Activated naive CD4-positive, alpha-beta T cell treated with anti-CD3 and anti-CD28 coated beads, Interleukin-2, amount 10 ng/mL, durations not matched to agents 7 days and 5 days (primary cell): ENCODE measurements at regions of chr2 and their contacts with region 1.

Region 1: DNA sequence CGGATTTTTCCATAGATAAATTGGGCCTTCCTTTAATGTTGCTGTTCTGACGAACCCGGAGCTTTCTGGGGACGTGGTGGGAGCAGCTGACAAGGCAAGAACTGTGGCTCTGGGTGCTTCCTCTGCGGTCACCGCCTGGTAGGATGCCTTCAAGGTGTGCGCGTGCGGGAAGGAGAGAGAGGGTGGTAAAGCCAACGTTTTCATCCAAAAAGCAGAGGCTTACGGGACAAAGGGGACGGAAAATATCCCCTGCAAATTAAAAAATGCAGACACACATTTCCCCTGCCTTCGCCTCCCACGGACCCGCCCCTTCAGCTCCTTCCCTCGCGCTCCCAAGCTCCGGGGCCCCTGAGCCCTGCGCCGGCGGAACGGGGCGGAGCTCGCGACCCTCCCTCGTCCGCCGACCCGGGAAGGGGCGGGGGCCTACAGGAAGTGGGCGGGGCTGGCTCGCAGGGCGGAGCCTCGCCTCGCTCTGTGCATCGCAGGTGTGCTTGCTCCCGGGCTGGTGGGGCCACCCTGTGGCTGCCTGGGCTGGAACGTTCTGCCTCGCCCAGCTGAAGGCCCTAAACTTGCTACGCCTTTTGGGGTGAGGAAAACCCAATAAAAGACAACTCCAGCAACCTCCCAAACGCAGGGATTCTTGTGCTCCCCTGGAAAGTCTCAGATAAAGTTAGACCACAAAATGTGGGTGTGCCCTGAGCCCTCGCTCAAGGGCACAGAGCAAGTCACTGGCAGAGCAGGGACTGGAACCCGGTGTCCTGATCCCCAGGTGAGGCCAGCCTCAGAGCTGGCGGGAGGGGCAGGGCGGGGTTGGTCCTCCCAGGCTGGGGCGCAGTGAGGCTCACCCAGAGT is 25.4 kb upstream of the SLC66A3 start:
- DNase-seq: peak; percentile 89
- H3K4me3 Mint-ChIP-seq: peak overlapping the region; percentile 59
- H3K27ac Mint-ChIP-seq: peak overlapping the region; percentile 33
- H3K4me1 Mint-ChIP-seq: peaks cover 44% of the 10 kb centered on the region
- H3K27me3 Mint-ChIP-seq: peaks cover 49% of the 10 kb centered on the region

Region 2: DNA sequence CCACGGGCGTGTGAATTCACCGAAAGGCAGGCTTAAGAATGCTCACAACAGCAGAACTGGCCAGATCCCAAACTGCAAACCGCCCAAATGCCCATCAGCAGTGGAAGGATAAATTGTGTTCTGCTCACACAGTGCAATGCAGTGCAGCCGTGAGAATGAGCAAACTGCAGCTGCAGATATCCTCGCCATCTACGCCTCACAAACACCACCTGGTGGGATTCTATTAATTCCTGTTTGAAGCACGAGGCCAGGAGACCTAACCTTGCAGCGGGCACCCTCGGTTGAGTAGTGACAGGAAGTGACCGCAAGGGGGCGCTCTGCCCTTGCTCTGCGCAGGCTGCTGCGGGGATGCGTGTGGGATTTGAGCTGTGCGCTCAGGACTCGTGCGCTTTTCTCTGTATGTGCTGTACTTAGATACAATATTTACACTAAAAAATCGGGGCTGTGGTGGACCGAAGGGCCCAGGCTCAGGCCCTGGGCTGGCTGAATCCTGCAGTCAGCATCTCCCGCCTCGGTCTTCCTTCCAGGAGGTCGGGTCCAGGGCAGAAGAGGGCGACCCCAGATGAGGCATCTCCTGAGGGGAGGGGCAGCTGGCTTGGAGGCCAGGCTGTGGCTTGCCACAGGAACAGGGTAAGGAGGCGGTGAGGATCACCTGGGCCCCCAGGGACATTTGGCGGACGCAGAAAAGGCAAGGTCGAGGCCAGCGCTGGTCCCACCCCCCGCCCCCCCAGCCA is 297.5 kb before region 1 on chr2:
- CTCF ChIA-PET with region 1: interaction called, 137 read pairs
- DNase-seq: peak; percentile 87
- H3K4me3 Mint-ChIP-seq: no peak overlapping the region
- H3K27ac Mint-ChIP-seq: no peak overlapping the region
- H3K4me1 Mint-ChIP-seq: peaks cover 4% of the 10 kb centered on the region
- H3K27me3 Mint-ChIP-seq: peaks cover 64% of the 10 kb centered on the region

Region 3: DNA sequence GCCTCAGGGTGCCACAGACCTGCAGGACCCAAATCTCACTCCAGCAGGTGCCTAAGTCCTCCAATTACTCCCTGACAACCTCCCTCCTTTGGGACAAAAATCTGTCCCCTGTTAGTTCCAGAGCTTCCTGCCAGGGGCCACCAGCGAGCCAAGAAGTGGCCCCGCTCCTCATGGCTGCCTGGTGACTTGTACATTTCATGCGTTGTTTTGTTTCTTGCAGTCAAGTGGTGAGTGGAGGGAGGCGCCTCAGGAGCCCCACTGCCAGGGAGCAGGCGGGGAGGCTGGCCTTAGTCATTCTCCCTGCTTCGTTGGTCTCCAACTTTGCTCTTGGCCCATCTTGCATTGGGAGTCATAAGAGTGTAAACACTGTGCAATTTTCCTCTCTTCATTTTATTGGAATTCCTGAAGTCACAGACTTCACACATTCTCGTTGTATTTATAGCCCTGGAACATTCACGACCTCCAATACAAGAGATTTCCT is 136.8 kb before region 1 on chr2:
- CTCF ChIA-PET with region 1: no interaction called
- DNase-seq: no peak
- H3K4me3 Mint-ChIP-seq: no peak overlapping the region
- H3K27ac Mint-ChIP-seq: no peak overlapping the region
- H3K4me1 Mint-ChIP-seq: no peaks in the 10 kb centered on the region
- H3K27me3 Mint-ChIP-seq: peaks cover 15% of the 10 kb centered on the region

Region 4: DNA sequence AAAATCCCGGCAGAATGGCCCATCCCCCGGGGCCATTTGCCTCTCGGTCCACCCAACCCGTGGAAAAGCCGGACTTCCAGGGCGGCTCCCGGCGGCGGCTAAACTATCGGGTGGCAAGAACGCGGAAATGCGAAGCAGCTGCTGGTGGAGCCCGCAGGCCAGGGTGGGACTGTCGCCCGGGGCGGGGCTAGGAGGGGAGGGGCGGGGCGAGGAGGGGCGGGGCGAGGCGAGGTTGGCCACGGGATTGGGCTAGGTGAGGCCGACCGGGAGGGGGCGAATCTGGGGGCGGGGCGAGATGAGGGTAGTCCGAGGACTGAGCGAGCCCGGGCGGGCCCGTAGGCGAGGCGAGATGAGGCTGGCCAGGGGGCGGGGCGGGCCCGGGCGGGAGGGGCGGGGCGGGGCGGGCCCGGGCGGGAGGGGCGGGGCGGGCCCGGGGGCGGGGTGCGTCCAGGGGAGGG is 25.1 kb after region 1 on chr2:
- CTCF ChIA-PET with region 1: interaction called, 12 read pairs
- DNase-seq: peak; percentile 99
- H3K4me3 Mint-ChIP-seq: peak overlapping the region; percentile 75
- H3K27ac Mint-ChIP-seq: peak overlapping the region; percentile 92
- H3K4me1 Mint-ChIP-seq: peaks cover 22% of the 10 kb centered on the region
- H3K27me3 Mint-ChIP-seq: peaks cover 29% of the 10 kb centered on the region

Region 5: DNA sequence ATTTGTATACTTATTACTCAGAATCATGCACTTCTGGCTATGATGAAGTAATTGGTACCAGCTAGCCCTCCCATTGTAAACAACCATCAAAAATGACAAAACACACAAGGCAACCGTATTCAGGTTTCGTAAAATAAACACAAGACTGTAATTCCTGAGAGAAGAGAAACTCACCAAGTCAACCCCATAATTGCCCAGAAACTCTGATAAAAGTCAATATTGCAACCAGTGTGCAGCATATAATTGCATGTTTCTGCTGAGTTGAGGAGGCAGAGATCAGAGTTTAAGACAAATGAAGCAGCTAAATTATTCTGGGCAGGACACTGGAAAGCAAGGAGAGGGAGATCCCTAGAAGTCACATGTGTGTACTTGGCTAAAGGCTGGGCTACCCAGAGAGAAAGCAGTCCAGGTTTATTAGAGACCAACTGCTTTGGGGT is 124.3 kb after region 1 on chr2:
- CTCF ChIA-PET with region 1: no interaction called
- DNase-seq: no peak
- H3K4me3 Mint-ChIP-seq: no peak overlapping the region
- H3K27ac Mint-ChIP-seq: no peak overlapping the region
- H3K4me1 Mint-ChIP-seq: no peaks in the 10 kb centered on the region
- H3K27me3 Mint-ChIP-seq: no peaks in the 10 kb centered on the region

Region 6: GRCh38 chr2:11411768-11412448 is 282.1 kb after region 1 on chr2:
- CTCF ChIA-PET with region 1: interaction called, 23 read pairs
- DNase-seq: no peak
- H3K4me3 Mint-ChIP-seq: no peak overlapping the region
- H3K27ac Mint-ChIP-seq: no peak overlapping the region
- H3K4me1 Mint-ChIP-seq: no peaks in the 10 kb centered on the region
- H3K27me3 Mint-ChIP-seq: peaks cover 13% of the 10 kb centered on the region

Region 7: GRCh38 chr2:11446733-11447248 is 317.0 kb after region 1 on chr2:
- CTCF ChIA-PET with region 1: interaction called, 55 read pairs
- DNase-seq: peak; percentile 62
- H3K4me3 Mint-ChIP-seq: no peak overlapping the region
- H3K27ac Mint-ChIP-seq: no peak overlapping the region
- H3K4me1 Mint-ChIP-seq: no peaks in the 10 kb centered on the region
- H3K27me3 Mint-ChIP-seq: no peaks in the 10 kb centered on the region

Region 8: DNA sequence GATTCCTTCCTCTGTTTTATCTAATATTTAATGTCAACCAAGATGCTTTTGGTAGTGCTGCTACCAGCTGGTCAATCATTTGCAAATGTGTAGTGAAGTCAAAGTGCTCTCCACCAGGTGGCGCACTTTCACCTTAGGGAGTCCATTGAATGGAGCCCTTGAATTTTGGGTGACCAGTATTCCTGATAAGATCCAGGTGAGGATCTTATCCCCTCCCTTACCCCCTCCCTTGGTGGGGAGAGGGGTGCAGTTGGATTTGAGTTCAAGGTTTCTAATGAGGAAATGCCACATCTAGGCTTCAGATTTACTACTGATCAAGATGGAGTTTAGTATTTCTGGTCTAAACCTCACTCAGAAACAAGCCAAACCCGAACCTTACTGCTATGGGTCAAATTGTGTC is 348.2 kb after region 1 on chr2:
- CTCF ChIA-PET with region 1: interaction called, 18 read pairs
- DNase-seq: peak; percentile 87
- H3K4me3 Mint-ChIP-seq: no peak overlapping the region
- H3K27ac Mint-ChIP-seq: no peak overlapping the region
- H3K4me1 Mint-ChIP-seq: peaks cover 1% of the 10 kb centered on the region
- H3K27me3 Mint-ChIP-seq: peaks cover 37% of the 10 kb centered on the region

Region 9: DNA sequence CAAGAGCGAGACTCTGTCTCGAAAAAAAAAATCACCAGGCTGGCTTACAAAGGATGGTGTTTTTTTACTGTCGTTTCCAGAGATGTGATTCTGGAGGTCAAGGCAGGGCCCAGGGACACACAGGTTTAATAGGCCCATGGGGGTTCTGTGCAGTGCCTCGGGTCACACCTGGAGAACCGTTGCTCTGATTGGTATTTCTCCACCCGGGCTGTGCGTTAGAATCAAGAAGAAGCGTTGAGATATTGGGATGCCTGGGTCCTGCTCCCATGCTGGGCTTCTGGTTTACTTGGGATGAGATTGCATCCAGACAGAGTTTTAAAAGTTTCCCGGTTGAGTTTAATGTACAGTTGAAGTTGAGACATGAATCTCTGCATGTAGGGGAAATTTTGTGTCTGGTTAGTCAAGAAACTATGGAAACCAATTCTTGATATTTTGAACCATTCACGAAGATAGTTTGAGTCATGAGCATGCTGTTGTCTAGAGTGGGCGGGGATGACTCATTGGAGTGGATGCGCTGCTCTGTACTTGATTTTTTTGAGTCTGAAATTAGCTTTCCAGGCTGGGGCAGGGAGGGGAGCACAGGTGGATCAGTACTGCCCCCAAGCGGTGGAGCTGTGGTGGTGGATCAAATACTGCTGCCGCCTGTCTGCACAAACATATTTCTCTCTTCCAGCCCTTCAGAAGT is 454.2 kb after region 1 on chr2:
- CTCF ChIA-PET with region 1: interaction called, 147 read pairs
- DNase-seq: peak; percentile 77
- H3K4me3 Mint-ChIP-seq: no peak overlapping the region
- H3K27ac Mint-ChIP-seq: no peak overlapping the region
- H3K4me1 Mint-ChIP-seq: no peaks in the 10 kb centered on the region
- H3K27me3 Mint-ChIP-seq: peaks cover 8% of the 10 kb centered on the region